ENCODE measurements at regions of chr11 and their contacts with region 1.

Region 1: GRCh38 chr11:10800292-10800691 is 8.4 kb downstream of the EIF4G2 start:
- DNase-seq: no peak
- ATAC-seq: no peak
- H3K4me3 ChIP-seq: no peak overlapping the region
- H3K27ac ChIP-seq: peak overlapping the region in 3 of 4 donors; percentile 3 to 14 (median 12)
- H3K4me1 ChIP-seq: peaks cover 8 to 18% of the 10 kb centered on the region in 2 donors
- H3K27me3 ChIP-seq: no peaks in the 10 kb centered on the region
- CTCF ChIP-seq: no peak
- POLR2A ChIP-seq: no peak

Region 2: GRCh38 chr11:10758957-10759356 is 41.3 kb before region 1 on chr11:
- in situ Hi-C with region 1: loop called in 1 of 4 experiments (anchors 5 kb)
- intact Hi-C with region 1: loop called (anchors 5 kb)
- DNase-seq: no peak
- ATAC-seq: no peak
- H3K4me3 ChIP-seq: no peak overlapping the region
- H3K27ac ChIP-seq: no peak overlapping the region
- H3K4me1 ChIP-seq: no peaks in the 10 kb centered on the region
- H3K27me3 ChIP-seq: no peaks in the 10 kb centered on the region
- CTCF ChIP-seq: no peak
- POLR2A ChIP-seq: no peak